ENCODE measurements at regions of chr17 and their contacts with region 1.

Region 1: DNA sequence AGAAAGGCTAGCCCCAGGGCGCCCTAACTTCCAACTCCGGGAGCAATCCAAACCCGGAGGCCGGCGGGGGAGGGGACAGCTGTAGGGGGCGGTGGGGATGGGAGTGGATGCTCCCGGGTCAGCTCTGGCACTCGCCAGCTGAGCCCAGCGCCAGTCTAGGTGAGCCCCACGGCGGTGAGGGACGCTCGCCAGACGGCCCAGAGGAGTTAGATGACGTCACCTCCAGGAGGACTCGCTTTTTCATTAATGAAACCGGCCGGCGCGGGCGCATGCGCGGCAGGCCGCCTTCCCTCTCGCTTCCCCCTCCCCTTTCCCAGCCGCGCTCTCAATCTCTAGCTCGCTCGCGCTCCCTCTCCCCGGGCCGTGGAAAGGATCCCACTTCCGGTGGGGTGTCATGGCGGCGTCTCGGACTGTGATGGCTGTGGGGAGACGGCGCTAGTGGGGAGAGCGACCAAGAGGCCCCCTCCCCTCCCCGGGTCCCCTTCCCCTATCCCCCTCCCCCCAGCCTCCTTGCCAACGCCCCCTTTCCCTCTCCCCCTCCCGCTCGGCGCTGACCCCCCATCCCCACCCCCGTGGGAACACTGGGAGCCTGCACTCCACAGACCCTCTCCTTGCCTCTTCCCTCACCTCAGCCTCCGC is at the start of gene NF1:
- DNase-seq: peak; percentile 98
- ATAC-seq: peak; percentile 98
- total RNA-seq, gene NF1: 37.1 TPM

Region 2: GRCh38 chr17:31013844-31014243 is 80.9 kb before region 1 on chr17:
- intact Hi-C with region 1: loop called (anchors 5 kb)
- DNase-seq: no peak
- ATAC-seq: no peak

Region 3: DNA sequence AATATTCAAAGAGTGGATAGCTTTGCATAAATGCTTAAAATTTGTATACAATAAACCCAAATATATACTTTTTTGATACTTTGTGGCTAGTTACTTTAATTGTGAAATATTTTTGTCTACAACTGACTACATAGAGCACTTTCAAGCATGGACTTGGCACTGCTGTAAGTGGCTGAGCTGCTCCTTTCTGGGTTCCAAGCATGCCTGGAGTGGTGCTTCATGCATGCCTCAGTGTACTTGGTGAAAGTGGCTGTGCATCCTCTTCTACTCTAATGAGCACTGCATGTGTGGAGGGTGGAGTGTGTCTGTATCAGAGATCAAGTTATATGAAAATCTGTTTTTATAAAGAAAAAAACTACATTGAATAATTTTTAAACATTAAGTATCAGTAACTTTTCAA is 108.2 kb after region 1 on chr17:
- intact Hi-C with region 1: loop called (anchors 10 kb)
- DNase-seq: no peak
- ATAC-seq: no peak

Measured in Right ventricle myocardium inferior (tissue), 1 donor.